Endothelial cell of umbilical vein (primary cell): ENCODE measurements at regions of chr10 and their contacts with region 1.

Region 1: GRCh38 chr10:27742195-27743011 is 3.2 kb downstream of the MKX start:
- DNase-seq: peak; percentile 66
- H3K4me3 ChIP-seq: peak overlapping the region; percentile 47 to 50 (median 48)
- H3K27ac ChIP-seq: no peak overlapping the region
- H3K4me1 ChIP-seq: peaks cover 25% of the 10 kb centered on the region
- H3K27me3 ChIP-seq: peaks cover 63 to 94% of the 10 kb centered on the region in 2 experiments
- CTCF ChIP-seq: peak; percentile 79 to 84
- POLR2A ChIP-seq: no peak

Region 2: DNA sequence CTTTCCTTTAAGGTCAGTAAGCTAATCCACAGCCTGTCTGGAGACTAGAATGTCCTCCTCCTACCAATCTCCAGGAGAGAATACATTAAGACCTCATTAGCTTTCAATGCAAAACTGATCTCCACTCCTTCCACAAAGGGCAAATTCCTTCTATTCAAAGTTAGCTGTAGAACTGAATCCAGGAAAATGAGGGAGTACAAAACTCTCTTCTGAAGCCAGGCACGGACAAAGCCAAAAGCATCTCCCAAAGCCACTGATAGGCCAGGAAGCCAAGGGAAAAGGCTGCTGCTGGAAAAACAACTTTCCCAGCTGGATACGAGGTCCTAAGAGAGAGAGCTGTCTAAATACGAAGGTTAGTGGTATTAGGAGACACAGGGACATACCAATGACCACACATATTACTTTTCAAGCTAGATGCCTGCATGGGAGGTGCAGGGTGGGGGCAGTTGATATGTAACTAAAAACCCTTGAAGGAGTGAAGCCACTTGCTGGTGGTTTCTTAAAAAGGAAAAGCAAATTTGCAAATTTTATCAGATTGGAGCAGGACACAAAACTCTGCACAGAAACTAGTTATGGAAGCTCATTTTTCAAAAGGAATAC is 40.4 kb before region 1 on chr10:
- CTCF ChIA-PET with region 1: no interaction called
- POLR2A ChIA-PET with region 1: no interaction called
- dilution Hi-C with region 1: no loop called
- intact Hi-C with region 1: no loop called
- DNase-seq: no peak
- H3K4me3 ChIP-seq: no peak overlapping the region
- H3K27ac ChIP-seq: no peak overlapping the region
- H3K4me1 ChIP-seq: no peaks in the 10 kb centered on the region
- H3K27me3 ChIP-seq: peaks cover 0 to 1% of the 10 kb centered on the region in 2 experiments
- CTCF ChIP-seq: no peak
- POLR2A ChIP-seq: no peak

Region 3: DNA sequence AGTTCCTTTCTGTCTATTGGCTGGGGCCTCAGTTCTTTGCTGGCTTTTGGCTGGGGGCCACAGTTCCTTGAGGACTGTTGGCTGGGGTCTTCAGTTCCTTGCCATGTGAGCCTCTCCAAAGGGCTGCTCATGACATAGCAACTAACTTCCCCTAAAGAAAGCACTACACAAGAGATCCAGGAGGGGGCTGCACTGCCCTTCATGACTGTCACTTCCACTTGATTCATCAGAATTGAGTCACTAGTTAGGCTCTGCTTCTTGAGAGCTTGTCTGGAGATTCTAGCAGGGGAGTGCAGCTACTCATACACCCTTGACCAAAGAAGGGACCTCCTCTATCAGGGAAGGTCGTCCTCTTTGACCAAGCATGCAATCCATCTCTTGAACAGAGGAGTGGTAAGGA is 41.3 kb after region 1 on chr10:
- CTCF ChIA-PET with region 1: interaction called, 3 read pairs
- POLR2A ChIA-PET with region 1: no interaction called
- dilution Hi-C with region 1: no loop called
- intact Hi-C with region 1: loop called (anchors 1 kb)
- DNase-seq: peak; percentile 64
- H3K4me3 ChIP-seq: no peak overlapping the region
- H3K27ac ChIP-seq: no peak overlapping the region
- H3K4me1 ChIP-seq: no peaks in the 10 kb centered on the region
- H3K27me3 ChIP-seq: peaks cover 3 to 5% of the 10 kb centered on the region in 2 experiments
- CTCF ChIP-seq: peak; percentile 54 to 68
- POLR2A ChIP-seq: no peak

Region 4: GRCh38 chr10:28137907-28138880 is 395.8 kb after region 1 on chr10:
- CTCF ChIA-PET with region 1: interaction called, 8 read pairs
- POLR2A ChIA-PET with region 1: no interaction called
- dilution Hi-C with region 1: no loop called
- intact Hi-C with region 1: loop called (anchors 5 kb)
- DNase-seq: peak; percentile 60
- H3K4me3 ChIP-seq: peak overlapping the region in 1 of 3 experiments; percentile 17
- H3K27ac ChIP-seq: peak overlapping the region; percentile 76
- H3K4me1 ChIP-seq: peaks cover 45% of the 10 kb centered on the region
- H3K27me3 ChIP-seq: no peaks in the 10 kb centered on the region
- CTCF ChIP-seq: no peak
- POLR2A ChIP-seq: no peak

Region 5: DNA sequence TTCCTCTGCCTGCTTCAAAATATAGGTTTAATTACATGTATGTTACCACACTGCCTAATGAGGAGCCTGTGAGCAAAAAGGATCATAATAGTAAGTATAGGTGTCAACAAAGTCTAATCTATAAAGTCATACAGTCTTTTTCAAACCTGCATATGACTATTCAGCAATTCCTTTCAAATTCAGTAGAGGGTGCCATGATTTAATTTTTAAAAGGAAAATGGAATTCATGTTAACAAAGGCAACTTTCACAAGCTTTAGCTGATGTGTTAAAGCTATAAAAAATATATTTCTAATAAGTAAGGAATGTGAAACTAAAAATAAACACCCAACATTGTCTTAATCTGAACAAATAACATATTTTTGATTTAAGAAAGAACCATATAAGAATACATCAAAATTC is 508.4 kb after region 1 on chr10:
- CTCF ChIA-PET with region 1: interaction called, 14 read pairs
- POLR2A ChIA-PET with region 1: no interaction called
- dilution Hi-C with region 1: no loop called
- intact Hi-C with region 1: no loop called
- DNase-seq: peak; percentile 22
- H3K4me3 ChIP-seq: no peak overlapping the region
- H3K27ac ChIP-seq: no peak overlapping the region
- H3K4me1 ChIP-seq: no peaks in the 10 kb centered on the region
- H3K27me3 ChIP-seq: peaks cover 7% of the 10 kb centered on the region in 2 experiments
- CTCF ChIP-seq: peak; percentile 15 to 19
- POLR2A ChIP-seq: no peak